ENCODE measurements at regions of chr5 and their contacts with region 1.

Region 1: GRCh38 chr5:157799578-157799977 is 56.1 kb downstream of the LSM11 start:
- DNase-seq: no peak
- ATAC-seq: no peak
- H3K4me3 ChIP-seq: no peak overlapping the region
- H3K27ac ChIP-seq: no peak overlapping the region
- H3K4me1 ChIP-seq: no peaks in the 10 kb centered on the region
- H3K27me3 ChIP-seq: no peaks in the 10 kb centered on the region
- CTCF ChIP-seq: no peak

Region 2: DNA sequence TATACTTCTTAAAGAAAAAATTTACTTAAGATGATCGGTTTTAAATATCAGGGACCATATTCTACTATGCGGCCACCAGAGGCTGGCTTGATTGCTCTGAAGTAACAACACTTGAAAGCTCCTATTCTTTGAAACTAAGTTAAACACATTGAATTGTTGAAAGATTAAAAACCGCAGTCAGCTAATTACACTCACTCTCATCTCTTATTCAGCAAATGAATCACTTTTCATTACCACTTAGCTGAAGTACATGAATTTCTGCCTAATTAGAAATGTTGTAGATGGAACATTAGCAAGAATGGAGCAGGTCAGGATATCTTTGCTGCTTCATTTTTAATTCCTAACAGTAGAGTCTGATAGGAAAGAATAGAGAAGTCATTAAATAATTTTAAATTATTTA is 13.8 kb before region 1 on chr5:
- CTCF ChIA-PET with region 1: no interaction called
- POLR2A ChIA-PET with region 1: interaction called, 13 read pairs
- in situ Hi-C with region 1: no loop called
- intact Hi-C with region 1: no loop called
- DNase-seq: no peak
- ATAC-seq: no peak
- H3K4me3 ChIP-seq: no peak overlapping the region
- H3K27ac ChIP-seq: no peak overlapping the region
- H3K4me1 ChIP-seq: no peaks in the 10 kb centered on the region
- H3K27me3 ChIP-seq: no peaks in the 10 kb centered on the region
- CTCF ChIP-seq: no peak

Region 3: GRCh38 chr5:157971571-157972216 is 172.1 kb after region 1 on chr5:
- CTCF ChIA-PET with region 1: no interaction called
- POLR2A ChIA-PET with region 1: no interaction called
- in situ Hi-C with region 1: no loop called
- intact Hi-C with region 1: no loop called
- DNase-seq: no peak
- ATAC-seq: no peak
- H3K4me3 ChIP-seq: no peak overlapping the region
- H3K27ac ChIP-seq: no peak overlapping the region
- H3K4me1 ChIP-seq: no peaks in the 10 kb centered on the region
- H3K27me3 ChIP-seq: no peaks in the 10 kb centered on the region
- CTCF ChIP-seq: no peak

Region 4: GRCh38 chr5:158039911-158040347 is 240.4 kb after region 1 on chr5:
- CTCF ChIA-PET with region 1: no interaction called
- POLR2A ChIA-PET with region 1: no interaction called
- in situ Hi-C with region 1: no loop called
- intact Hi-C with region 1: no loop called
- DNase-seq: no peak
- ATAC-seq: no peak
- H3K4me3 ChIP-seq: no peak overlapping the region
- H3K27ac ChIP-seq: no peak overlapping the region
- H3K4me1 ChIP-seq: no peaks in the 10 kb centered on the region
- H3K27me3 ChIP-seq: no peaks in the 10 kb centered on the region
- CTCF ChIP-seq: no peak